K562 (cell line): ENCODE measurements at regions of chr7 and their contacts with region 1.

Region 1: DNA sequence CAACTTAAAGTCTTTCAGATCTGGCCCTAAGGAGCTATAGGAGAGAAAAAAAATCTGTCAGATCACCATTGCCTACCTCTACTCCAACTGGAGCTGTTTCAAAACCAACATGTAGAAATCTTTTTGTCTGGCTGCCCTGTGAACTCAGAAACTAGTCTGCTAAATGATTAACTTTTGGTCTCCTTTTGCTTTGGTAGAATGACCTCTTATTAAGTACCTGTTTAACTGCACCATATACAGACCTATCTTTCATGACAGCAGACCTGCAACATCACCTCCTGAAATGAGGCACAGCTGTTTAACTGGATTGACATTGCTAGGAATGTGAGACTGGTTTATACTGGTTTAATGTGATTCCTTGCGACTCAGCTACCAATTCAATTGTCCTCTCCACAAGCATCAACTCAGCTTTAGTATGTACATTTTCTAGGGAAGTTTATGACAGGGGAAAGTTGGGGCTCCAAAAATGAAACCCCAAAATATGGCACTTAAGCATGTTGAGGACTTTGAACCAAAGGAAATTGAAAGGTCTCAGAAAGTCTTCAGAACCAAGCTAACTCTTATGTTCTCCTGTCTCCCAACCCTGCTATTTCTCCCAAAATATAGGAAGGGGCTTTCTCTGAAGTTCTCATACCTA is 1.8 kb downstream of the CYP3A43 start:
- DNase-seq: no peak
- ATAC-seq: no peak
- H3K4me3 ChIP-seq: no peak overlapping the region
- H3K27ac ChIP-seq: no peak overlapping the region
- H3K4me1 ChIP-seq: peaks cover 4 to 45% of the 10 kb centered on the region in 2 experiments
- H3K27me3 ChIP-seq: no peaks in the 10 kb centered on the region
- CTCF ChIP-seq: no peak
- EP300 ChIP-seq: no peak
- POLR2A ChIP-seq: no peak
- RAD21 ChIP-seq: no peak

Region 2: DNA sequence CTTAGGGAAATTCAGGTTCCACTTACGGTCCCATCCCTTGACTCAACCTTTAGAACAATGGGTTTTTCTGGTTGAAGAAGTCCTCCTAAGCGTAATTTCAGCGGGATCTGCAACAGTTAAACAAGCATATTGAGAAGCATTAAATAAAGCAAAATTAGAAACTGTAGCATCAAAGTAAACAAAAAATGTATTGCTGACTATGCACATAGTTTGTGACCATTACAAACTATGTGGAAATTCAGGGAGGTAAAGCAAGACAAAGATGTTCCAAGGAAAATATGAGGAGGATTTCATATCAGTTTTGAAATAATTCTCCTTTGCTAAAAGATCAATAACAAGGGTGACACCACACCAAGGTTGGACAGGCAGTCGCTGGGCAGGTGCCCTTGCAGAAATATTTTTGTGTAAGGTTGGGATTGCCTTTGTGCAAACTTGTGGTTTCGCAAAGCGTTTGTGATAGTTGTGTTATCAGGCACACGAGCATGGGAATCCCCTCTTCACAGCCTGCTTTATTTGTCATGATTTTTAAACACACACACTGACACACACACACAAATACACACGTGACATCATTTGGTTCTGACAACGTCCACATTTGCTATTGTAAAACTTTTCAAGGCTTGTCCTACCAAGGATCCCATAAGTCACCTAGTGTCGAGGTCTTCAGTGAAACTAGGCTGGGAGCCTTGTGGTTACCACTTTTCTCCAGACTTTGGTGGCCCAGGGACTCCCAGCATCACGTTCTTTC is 144.3 kb before region 1 on chr7:
- CTCF ChIA-PET with region 1: no interaction called
- POLR2A ChIA-PET with region 1: no interaction called
- in situ Hi-C with region 1: no loop called
- intact Hi-C with region 1: loop called (anchors 2 kb)
- DNase-seq: no peak
- ATAC-seq: peak; percentile 65
- H3K4me3 ChIP-seq: no peak overlapping the region
- H3K27ac ChIP-seq: 0 out of 3 replicates have a peak overlapping the region, but pooled peaks have one; percentile 3
- H3K4me1 ChIP-seq: peaks cover 9% of the 10 kb centered on the region in 2 experiments; a peak in 4 of 5 replicates
- H3K27me3 ChIP-seq: no peaks in the 10 kb centered on the region
- CTCF ChIP-seq: no peak
- EP300 ChIP-seq: no peak
- POLR2A ChIP-seq: no peak
- RAD21 ChIP-seq: no peak

Region 3: DNA sequence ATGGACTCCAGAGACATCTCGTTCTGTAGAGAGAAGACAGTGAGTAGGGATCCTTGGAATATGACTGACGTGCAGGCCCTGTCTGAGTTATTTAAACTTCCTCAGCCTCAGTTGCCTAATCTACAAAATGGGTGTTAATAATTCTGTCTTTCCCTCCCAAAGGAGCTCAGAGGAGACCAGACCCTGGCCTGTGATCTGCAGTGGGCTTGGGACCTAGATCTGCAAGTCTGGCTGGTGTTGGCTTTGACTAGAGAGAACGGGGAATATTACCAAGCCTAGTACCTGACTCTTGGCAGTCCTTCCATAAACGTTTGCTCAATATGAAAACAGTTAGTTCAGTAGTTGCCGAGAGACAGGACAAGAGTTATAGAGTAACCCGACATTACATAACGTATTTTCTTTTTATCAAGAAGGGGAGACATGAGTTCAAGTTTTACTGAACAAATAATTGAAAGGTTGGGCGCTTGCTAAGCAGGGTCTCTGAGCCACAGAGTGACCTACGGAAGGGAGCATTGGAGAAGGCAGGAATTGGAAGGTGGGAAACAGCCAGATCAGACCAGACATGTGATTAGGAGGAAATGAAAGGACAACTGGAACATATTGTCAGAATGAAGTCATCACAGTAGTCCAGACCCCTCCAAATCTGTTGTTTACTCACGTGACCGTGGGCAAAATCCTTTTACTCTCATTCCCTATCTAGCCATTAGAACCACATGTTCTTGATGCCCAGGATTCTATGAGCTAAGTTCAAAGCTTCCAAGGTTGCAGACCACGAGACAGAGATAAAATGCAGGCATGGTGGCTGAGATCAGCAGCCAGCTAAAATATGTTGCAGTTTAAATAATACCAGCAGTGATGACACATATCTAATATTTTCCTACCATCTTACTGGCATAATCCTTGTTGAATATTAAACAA is 34.8 kb before region 1 on chr7:
- CTCF ChIA-PET with region 1: no interaction called
- POLR2A ChIA-PET with region 1: no interaction called
- in situ Hi-C with region 1: no loop called
- intact Hi-C with region 1: loop called (anchors 5 kb)
- DNase-seq: no peak
- ATAC-seq: no peak
- H3K4me3 ChIP-seq: no peak overlapping the region
- H3K27ac ChIP-seq: no peak overlapping the region
- H3K4me1 ChIP-seq: peaks cover 0 to 3% of the 10 kb centered on the region in 2 experiments; a peak in 2 of 5 replicates
- H3K27me3 ChIP-seq: no peaks in the 10 kb centered on the region
- CTCF ChIP-seq: no peak
- EP300 ChIP-seq: no peak
- POLR2A ChIP-seq: no peak
- RAD21 ChIP-seq: no peak